ENCODE measurements at regions of chr19 and their contacts with region 1.

Region 1: DNA sequence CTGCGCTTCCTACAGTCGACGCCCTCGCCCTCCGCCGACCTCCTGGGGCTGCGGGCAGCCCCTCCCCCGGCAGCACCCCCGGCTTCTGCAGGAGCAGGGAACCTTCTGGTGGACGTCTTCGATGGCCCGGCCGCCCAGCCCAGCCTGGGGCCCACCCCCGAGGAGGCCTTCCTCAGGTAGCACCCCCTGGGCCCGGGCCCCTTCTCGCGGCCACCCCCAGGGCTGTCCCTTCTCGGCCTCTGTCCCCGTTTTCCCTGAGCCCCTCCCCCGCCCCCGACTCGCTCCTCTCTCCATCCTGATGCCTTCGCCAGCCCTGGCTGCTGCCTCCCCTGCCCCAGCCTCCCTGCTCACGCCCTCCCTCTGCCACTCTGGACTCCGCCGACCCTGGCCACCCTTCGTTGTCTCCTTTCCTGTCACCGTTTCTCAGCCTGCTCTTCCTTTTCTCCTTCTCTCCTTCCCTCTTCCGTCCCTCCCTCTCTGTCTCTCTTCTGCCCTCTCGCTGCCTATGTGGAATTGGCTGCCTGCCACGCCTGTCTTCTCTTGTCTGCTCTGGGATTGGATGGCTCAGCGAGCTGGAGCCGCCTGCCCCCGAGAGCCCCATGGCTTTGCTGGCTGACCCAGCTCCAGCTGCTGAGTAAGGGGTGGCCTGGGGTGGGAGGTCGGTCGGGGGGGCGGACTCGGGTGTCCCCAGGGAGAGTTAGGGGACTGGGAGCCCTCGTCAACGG is 11.0 kb downstream of the FUZ start:
- DNase-seq: peak; percentile 94 to 97 (median 97)
- H3K4me3 ChIP-seq: peak overlapping the region; percentile 35
- H3K27ac ChIP-seq: peak overlapping the region; percentile 55 to 61
- H3K4me1 ChIP-seq: peaks cover 8% of the 10 kb centered on the region
- H3K27me3 ChIP-seq: no peaks in the 10 kb centered on the region
- CTCF ChIP-seq: peak; percentile 54 to 75 (median 57)
- EP300 ChIP-seq: no peak
- POLR2A ChIP-seq: no peak

Region 2: GRCh38 chr19:49727217-49728030 is 74.7 kb before region 1 on chr19:
- intact Hi-C with region 1: loop called in 2 of 4 experiments (anchors 5 to 10 kb)
- DNase-seq: peak; percentile 85 to 92 (median 90)
- H3K4me3 ChIP-seq: no peak overlapping the region
- H3K27ac ChIP-seq: peak overlapping the region; percentile 26 to 76
- H3K4me1 ChIP-seq: peaks cover 8% of the 10 kb centered on the region
- H3K27me3 ChIP-seq: no peaks in the 10 kb centered on the region
- CTCF ChIP-seq: peak in 1 of 3 donors; percentile 12
- EP300 ChIP-seq: no peak
- POLR2A ChIP-seq: no peak

Region 3: GRCh38 chr19:49766007-49766937 is 35.9 kb before region 1 on chr19:
- intact Hi-C with region 1: loop called in 2 of 4 experiments (anchors 5 kb)
- DNase-seq: peak; percentile 100
- H3K4me3 ChIP-seq: peak overlapping the region; percentile 97
- H3K27ac ChIP-seq: peak overlapping the region; percentile 63 to 92
- H3K4me1 ChIP-seq: peaks cover 13% of the 10 kb centered on the region
- H3K27me3 ChIP-seq: no peaks in the 10 kb centered on the region
- CTCF ChIP-seq: peak in 2 of 3 donors; percentile 30 to 31
- EP300 ChIP-seq: no peak
- POLR2A ChIP-seq: peak; percentile 86

Region 4: DNA sequence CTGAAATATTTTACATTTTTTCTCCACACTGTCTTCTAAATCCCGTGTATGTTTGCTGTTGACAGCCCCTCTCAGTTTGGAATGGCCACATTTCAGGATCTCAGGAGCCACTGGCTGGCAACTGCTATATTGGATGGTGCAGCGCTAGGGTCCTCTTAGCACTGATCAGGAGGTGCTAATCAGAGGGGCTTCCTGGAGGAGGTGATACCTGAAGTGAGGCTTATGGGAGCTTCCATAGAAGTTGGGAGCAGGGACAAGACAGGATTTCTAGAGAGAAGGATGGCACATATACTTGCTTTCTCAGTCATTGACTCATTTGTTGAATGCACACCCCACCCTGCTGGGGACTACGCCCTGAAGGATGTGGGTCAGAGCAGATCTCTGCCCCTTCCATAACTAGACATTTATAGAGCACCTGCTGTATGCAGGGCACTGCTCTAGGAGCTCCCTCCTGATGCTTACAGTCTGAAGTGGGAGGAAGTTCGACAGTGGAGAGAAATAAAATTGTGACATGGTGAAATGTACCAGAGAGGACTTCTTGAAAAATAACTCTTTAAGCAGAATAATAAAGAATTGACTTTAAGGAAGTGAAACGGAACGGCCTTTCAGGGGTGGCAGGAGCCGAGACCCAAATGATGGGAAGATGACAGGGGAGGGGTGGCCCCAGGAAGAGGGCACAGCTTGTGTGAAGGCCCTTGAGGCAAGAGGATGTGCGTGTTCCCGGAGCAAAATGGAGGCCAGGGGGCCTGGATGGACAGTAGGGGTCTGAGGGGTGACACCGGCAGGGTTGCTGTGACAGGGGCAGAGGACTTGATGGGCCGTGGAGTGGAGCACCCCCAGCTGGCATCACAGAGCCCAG is 22.2 kb before region 1 on chr19:
- intact Hi-C with region 1: no loop called
- DNase-seq: no peak
- H3K4me3 ChIP-seq: no peak overlapping the region
- H3K27ac ChIP-seq: no peak overlapping the region
- H3K4me1 ChIP-seq: no peaks in the 10 kb centered on the region
- H3K27me3 ChIP-seq: no peaks in the 10 kb centered on the region
- CTCF ChIP-seq: no peak
- EP300 ChIP-seq: no peak
- POLR2A ChIP-seq: no peak